Transverse colon (tissue), 4 donors: ENCODE measurements at regions of chr18 and their contacts with region 1.

Region 1: DNA sequence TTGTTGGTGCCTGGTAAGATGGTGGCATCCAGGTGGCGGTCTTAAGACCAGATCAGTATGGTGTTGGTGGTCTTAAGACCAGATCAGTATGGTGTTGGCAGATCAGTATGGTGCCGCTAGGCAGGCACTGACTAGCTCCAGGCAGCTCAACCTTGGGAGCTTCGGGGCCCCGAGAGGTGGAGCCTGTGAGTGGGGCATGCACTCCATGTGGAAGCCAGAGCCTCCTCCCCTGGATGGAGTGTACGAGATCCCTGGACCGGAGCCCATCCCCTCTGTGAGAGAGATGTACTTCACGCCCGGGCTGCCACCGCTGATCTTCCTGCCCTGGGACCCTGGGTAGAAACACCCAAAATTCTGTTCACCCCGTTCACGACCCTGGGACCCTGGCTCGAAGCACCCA is 19.0 kb downstream of the MALT1 start:
- DNase-seq: no peak
- H3K4me3 ChIP-seq: no peak overlapping the region
- H3K27ac ChIP-seq: no peak overlapping the region
- H3K4me1 ChIP-seq: no peaks in the 10 kb centered on the region
- H3K27me3 ChIP-seq: no peaks in the 10 kb centered on the region
- CTCF ChIP-seq: no peak
- EP300 ChIP-seq: no peak
- POLR2A ChIP-seq: no peak

Region 2: GRCh38 chr18:58661423-58661822 is 28.8 kb before region 1 on chr18:
- in situ Hi-C with region 1: no loop called
- intact Hi-C with region 1: loop called (anchors 1 kb)
- DNase-seq: no peak
- H3K4me3 ChIP-seq: no peak overlapping the region
- H3K27ac ChIP-seq: no peak overlapping the region
- H3K4me1 ChIP-seq: peaks cover 0 to 6% (median 0%) of the 10 kb centered on the region in 4 donors
- H3K27me3 ChIP-seq: no peaks in the 10 kb centered on the region
- CTCF ChIP-seq: no peak
- EP300 ChIP-seq: no peak
- POLR2A ChIP-seq: no peak